Right ventricle myocardium superior (tissue), 1 donor: ENCODE measurements at regions of chr5 and their contacts with region 1.

Region 1: DNA sequence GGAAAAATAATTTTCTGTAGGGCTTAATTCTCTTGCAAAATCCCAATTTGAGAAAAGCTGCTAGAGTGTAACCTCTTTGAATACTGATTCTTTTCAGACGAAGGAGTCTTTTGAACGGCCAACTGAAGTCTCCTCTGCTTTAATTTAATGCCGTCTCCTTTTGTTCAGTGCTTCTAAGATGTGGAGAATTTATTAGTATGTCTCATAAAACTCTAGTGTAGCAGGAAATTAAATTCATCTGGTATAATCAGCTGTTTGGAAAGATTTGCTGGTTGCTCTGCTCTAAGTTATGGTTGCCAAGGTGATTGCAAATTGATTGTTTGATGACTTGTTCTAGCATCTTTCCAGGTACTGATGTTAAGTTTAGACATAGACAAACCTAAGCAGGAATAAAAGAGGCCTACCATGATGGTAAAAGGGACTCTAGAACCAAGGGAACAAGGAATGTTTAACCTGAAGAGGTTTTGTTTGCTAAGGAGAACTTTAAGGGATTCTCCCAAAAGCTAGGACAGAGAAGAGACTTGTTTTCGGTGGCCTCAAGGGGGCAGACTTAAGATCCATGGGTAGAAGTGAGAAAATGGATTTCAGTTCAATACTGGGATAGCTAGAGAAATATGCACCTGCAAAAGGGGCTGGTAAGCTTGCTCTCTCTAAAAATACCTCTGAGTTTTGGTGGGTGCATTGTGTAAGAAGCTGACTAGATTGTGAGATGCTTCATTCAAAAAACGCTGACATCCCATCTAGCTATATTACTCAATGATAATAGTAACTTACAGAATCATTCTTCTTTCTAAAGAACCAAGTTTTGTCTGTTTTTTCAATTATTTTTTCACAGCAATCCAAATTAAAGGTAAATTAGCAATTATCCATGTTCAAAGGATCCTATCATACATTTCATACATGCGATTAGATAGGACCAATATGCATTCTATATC is 5.7 kb upstream of the ADRB2 start:
- DNase-seq: no peak
- ATAC-seq: no peak

Region 2: DNA sequence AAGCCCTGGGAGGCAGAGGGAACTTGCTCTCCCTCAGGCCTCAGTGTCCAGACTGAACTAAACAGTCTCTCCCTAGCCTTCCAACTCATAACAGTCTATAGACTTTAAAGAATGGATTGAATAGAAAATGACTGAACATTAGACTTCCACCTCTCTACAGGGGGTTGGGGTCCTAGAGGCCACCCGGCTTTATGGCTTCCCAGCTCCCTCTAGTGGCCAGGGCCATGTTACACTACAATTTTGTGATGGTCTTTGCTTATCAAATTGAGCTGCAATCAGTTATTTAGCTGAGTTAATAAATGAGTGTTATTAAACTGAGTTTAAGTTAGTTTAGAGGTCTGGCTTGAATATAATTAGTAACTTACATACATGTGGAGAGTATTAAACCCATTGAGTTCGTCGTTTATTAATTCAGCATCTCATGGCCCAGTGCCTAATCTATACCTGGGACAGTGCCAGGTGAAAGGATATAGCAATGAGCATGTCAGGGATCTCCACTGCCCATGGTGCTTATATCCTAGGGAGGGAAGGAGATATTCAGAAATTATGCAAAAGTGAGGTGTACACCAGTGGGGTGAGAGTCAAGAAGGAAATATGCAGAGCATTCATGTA is 137.0 kb after region 1 on chr5:
- intact Hi-C with region 1: loop called (anchors 5 kb)
- DNase-seq: no peak
- ATAC-seq: peak; percentile 50